ENCODE measurements at regions of chr12 and their contacts with region 1.

Region 1: GRCh38 chr12:53098982-53099651 is 1.6 kb downstream of the IGFBP6 start:
- DNase-seq: peak; percentile 77 to 93 (median 86)
- ATAC-seq: peak; percentile 33 to 39
- H3K4me3 Mint-ChIP-seq: peak overlapping the region; percentile 79 to 91 (median 86)
- H3K27ac Mint-ChIP-seq: peak overlapping the region; percentile 56 to 93 (median 82)
- H3K4me1 Mint-ChIP-seq: peaks cover 39 to 62% (median 58%) of the 10 kb centered on the region in 4 donors
- H3K27me3 Mint-ChIP-seq: peaks cover 0 to 1% (median 0%) of the 10 kb centered on the region in 5 donors

Region 2: GRCh38 chr12:53065975-53066931 is 32.9 kb before region 1 on chr12:
- POLR2A ChIA-PET with region 1: interaction called, 34 read pairs
- DNase-seq: peak; percentile 31 to 75 (median 60)
- ATAC-seq: peak; percentile 63 to 83
- H3K4me3 Mint-ChIP-seq: no peak overlapping the region
- H3K27ac Mint-ChIP-seq: peak overlapping the region in 8 of 10 donors; percentile 33 to 88 (median 68)
- H3K4me1 Mint-ChIP-seq: peaks cover 12 to 31% (median 18%) of the 10 kb centered on the region in 4 donors
- H3K27me3 Mint-ChIP-seq: no peaks in the 10 kb centered on the region

Region 3: GRCh38 chr12:53123578-53124351 is 24.6 kb after region 1 on chr12:
- POLR2A ChIA-PET with region 1: no interaction called
- DNase-seq: no peak
- ATAC-seq: no peak
- H3K4me3 Mint-ChIP-seq: no peak overlapping the region
- H3K27ac Mint-ChIP-seq: no peak overlapping the region
- H3K4me1 Mint-ChIP-seq: peaks cover 0 to 3% (median under 1%) of the 10 kb centered on the region in 4 donors
- H3K27me3 Mint-ChIP-seq: peaks cover 0 to 1% (median 0%) of the 10 kb centered on the region in 5 donors